SK-N-SH (cell line): ENCODE measurements at regions of chr17 and their contacts with region 1.

Region 1: GRCh38 chr17:50026901-50027630 is 28.8 kb upstream of the ITGA3 start:
- DNase-seq: peak; percentile 93
- H3K4me3 ChIP-seq: peak overlapping the region; percentile 46 to 71
- H3K27ac ChIP-seq: peak overlapping the region; percentile 74 to 99; a peak in 3 of 4 replicates
- H3K4me1 ChIP-seq: peaks cover 16 to 21% of the 10 kb centered on the region in 2 experiments; a peak in 3 of 4 replicates
- H3K27me3 ChIP-seq: no peaks in the 10 kb centered on the region
- CTCF ChIP-seq: peak; percentile 100
- EP300 ChIP-seq: no peak; a peak in 1 of 4 replicates
- RAD21 ChIP-seq: peak; percentile 95

Region 2: GRCh38 chr17:49928837-49929475 is 98.1 kb before region 1 on chr17:
- CTCF ChIA-PET with region 1: no interaction called
- POLR2A ChIA-PET with region 1: no interaction called
- DNase-seq: no peak
- H3K4me3 ChIP-seq: no peak overlapping the region
- H3K27ac ChIP-seq: no peak overlapping the region
- H3K4me1 ChIP-seq: peaks cover 0 to 9% of the 10 kb centered on the region in 2 experiments; a peak in 1 of 4 replicates
- H3K27me3 ChIP-seq: peaks cover 96% of the 10 kb centered on the region
- CTCF ChIP-seq: no peak
- EP300 ChIP-seq: no peak
- RAD21 ChIP-seq: no peak

Region 3: GRCh38 chr17:50009282-50009681 is 17.8 kb before region 1 on chr17:
- CTCF ChIA-PET with region 1: interaction called, 11 read pairs
- POLR2A ChIA-PET with region 1: no interaction called
- DNase-seq: no peak
- H3K4me3 ChIP-seq: no peak overlapping the region
- H3K27ac ChIP-seq: no peak overlapping the region
- H3K4me1 ChIP-seq: no peaks in the 10 kb centered on the region
- H3K27me3 ChIP-seq: peaks cover 24% of the 10 kb centered on the region; the same call in 1 of the 2 replicates
- CTCF ChIP-seq: no peak
- EP300 ChIP-seq: no peak
- RAD21 ChIP-seq: no peak

Region 4: GRCh38 chr17:50037321-50038071 is 10.4 kb after region 1 on chr17:
- CTCF ChIA-PET with region 1: interaction called, 64 read pairs
- POLR2A ChIA-PET with region 1: no interaction called
- DNase-seq: peak; percentile 55
- H3K4me3 ChIP-seq: no peak overlapping the region
- H3K27ac ChIP-seq: peak overlapping the region; percentile 61 to 65; a peak in 3 of 4 replicates
- H3K4me1 ChIP-seq: peaks cover 7 to 37% of the 10 kb centered on the region in 2 experiments; a peak in 2 of 4 replicates
- H3K27me3 ChIP-seq: no peaks in the 10 kb centered on the region
- CTCF ChIP-seq: no peak
- EP300 ChIP-seq: peak in 1 of 2 experiments; percentile 73; a peak in 1 of 4 replicates
- RAD21 ChIP-seq: no peak

Region 5: GRCh38 chr17:50055426-50056230 is 28.6 kb after region 1 on chr17 and contains the start of gene ITGA3:
- CTCF ChIA-PET with region 1: interaction called, 126 read pairs
- POLR2A ChIA-PET with region 1: no interaction called
- DNase-seq: peak; percentile 93
- H3K4me3 ChIP-seq: peak within 1 kb of the TSS; percentile 90 to 91
- H3K27ac ChIP-seq: peak within 1 kb of the TSS; percentile 90 to 100
- H3K4me1 ChIP-seq: peaks cover 64 to 65% of the 10 kb centered on the region in 2 experiments
- H3K27me3 ChIP-seq: no peaks in the 10 kb centered on the region
- CTCF ChIP-seq: no peak; the same call in 1 of the 2 replicates
- EP300 ChIP-seq: peak in 1 of 2 experiments; percentile 66; a peak in 1 of 4 replicates
- RAD21 ChIP-seq: peak; percentile 2; the same call in 1 of the 2 replicates
- polyA plus RNA-seq, gene ITGA3: 543 and 766 TPM in 2 replicates

Region 6: DNA sequence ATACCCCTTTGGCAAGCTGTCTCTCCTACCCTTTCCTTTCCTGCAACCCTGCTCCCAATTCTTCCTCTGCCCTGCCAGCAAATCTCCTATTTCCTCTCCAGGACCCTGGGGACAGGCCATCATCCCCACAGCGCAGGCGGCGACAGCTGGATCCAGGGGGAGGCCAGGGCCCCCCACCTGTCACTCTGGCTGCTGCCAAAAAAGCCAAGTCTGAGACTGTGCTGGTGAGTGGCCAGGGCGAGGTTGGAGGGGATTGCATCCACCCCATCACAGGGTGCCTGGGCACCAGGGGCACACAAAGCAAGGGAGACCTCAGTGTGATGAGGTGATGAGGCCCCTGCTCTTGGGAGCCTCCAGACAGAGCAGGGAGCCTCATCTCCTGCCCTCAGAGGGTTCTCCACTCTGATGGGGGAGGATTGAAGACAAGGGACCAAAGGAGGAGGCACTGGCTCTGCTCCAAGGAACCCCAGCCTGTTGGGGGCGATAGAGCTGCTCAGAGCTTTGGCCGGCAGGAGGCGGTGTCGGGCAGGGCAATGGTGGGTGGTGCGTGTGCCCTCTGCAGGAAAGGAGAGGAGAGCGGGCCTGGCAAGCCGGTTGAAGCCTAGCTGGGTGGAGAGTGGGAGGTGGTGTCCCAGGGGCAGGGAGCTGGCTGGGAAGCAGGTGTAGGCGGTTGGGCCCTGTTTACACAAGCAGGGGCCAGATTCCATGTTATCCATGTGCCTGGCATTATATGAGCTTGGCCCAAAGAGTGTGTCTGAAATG is 52.4 kb after region 1 on chr17:
- CTCF ChIA-PET with region 1: interaction called, 33 read pairs
- POLR2A ChIA-PET with region 1: no interaction called
- DNase-seq: no peak
- H3K4me3 ChIP-seq: no peak overlapping the region
- H3K27ac ChIP-seq: peak overlapping the region in 1 of 2 experiments; percentile 50; a peak in 1 of 4 replicates
- H3K4me1 ChIP-seq: no peaks in the 10 kb centered on the region
- H3K27me3 ChIP-seq: no peaks in the 10 kb centered on the region
- CTCF ChIP-seq: peak; percentile 71
- EP300 ChIP-seq: no peak
- RAD21 ChIP-seq: no peak; the same call in 1 of the 2 replicates